AG04449 (cell line): ENCODE measurements at regions of chr5 and their contacts with region 1.

Region 1: GRCh38 chr5:54492178-54492577 is 25.4 kb upstream of the SNX18 start:
- DNase-seq: no peak
- H3K4me3 ChIP-seq: no peak overlapping the region
- CTCF ChIP-seq: no peak

Region 2: GRCh38 chr5:54254482-54255198 is 237.5 kb before region 1 on chr5:
- CTCF ChIA-PET with region 1: interaction called, 190 read pairs
- POLR2A ChIA-PET with region 1: no interaction called
- DNase-seq: no peak
- H3K4me3 ChIP-seq: no peak overlapping the region
- CTCF ChIP-seq: no peak

Region 3: GRCh38 chr5:54415896-54416601 is 76.1 kb before region 1 on chr5:
- CTCF ChIA-PET with region 1: interaction called, 46 read pairs
- POLR2A ChIA-PET with region 1: no interaction called
- DNase-seq: peak; percentile 75
- H3K4me3 ChIP-seq: no peak overlapping the region
- CTCF ChIP-seq: no peak

Region 4: DNA sequence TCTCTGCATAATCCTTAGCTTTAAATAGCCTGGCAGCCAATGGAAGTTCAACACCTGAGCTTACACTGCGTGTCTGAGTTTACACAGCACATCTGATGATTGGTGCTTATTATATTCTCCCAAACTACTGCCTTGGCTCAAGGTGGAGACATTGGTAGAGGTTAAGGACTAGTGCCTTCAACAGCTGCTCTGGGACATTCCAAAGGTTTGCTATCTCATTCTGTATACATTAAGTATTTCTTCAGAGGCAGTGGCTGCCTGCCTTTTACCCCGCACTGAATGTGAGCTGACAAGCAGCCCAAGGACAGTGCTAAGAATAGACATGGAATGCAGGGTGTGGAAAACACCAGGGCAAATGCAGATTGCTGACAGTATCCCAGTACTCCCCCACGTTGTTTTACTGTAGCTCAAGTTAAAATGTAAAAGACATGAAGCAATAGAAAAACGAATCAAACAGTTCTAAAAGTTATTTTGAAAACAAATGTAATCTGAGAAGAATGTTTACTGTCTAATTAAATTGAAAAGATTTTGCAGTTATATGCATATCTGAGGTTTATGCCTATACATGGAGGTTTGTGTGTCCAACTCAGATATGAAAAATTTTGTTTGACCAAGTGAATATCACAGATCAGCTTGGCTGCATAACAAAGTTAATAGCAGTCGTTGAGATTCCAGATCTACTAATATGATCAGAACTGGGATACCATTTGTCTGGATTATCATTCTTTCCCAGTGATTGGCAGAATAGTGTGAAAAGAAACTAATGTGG is 34.9 kb before region 1 on chr5:
- CTCF ChIA-PET with region 1: interaction called, 55 read pairs
- POLR2A ChIA-PET with region 1: no interaction called
- DNase-seq: peak; percentile 84
- H3K4me3 ChIP-seq: peak overlapping the region; percentile 32
- CTCF ChIP-seq: no peak

Region 5: DNA sequence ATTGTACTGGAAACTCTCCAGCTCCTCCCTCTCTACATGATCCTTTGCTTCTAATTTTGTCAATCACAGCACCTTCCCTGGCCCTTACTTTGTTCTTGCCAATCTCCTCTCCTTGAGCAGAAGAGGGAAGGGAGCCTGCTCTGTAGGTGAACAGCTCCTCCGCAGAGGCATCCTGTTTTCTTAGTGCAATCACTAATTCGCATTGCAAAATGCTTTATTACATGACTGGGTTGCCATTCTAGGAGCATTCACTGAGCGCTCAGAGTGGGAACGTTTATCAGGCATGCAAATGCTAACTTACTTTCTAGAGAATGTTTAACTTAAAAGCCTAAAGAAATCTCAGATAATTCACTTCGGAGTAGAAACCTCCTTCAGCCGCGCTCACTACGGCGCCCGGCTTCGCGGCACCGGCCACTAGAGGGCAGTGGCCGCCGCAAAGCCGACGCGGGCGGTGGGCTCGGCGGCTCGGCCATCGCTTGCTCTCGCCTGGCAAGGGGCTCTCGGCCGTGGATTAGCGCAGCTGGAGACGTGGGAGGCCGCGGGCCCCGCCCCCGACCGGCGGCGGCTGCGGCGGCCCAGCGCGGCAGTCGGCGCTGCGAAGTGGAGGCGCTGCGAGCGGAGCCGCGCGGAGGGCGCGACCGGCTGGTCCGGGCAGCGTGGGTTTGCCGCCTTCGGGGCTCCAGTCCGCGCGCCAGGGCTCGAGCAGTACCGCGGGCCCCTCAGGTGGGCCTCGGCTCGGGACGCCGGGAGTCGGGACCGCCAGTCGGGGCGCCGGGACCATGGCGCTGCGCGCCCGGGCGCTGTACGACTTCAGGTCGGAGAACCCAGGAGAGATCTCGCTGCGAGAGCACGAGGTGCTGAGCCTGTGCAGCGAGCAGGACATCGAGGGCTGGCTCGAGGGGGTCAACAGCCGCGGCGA is 25.3 kb after region 1 on chr5 and contains the start of gene SNX18:
- CTCF ChIA-PET with region 1: interaction called, 27 read pairs
- POLR2A ChIA-PET with region 1: no interaction called
- DNase-seq: peak; percentile 56
- H3K4me3 ChIP-seq: peak within 1 kb of the TSS; percentile 62
- CTCF ChIP-seq: peak; percentile 88

Region 6: DNA sequence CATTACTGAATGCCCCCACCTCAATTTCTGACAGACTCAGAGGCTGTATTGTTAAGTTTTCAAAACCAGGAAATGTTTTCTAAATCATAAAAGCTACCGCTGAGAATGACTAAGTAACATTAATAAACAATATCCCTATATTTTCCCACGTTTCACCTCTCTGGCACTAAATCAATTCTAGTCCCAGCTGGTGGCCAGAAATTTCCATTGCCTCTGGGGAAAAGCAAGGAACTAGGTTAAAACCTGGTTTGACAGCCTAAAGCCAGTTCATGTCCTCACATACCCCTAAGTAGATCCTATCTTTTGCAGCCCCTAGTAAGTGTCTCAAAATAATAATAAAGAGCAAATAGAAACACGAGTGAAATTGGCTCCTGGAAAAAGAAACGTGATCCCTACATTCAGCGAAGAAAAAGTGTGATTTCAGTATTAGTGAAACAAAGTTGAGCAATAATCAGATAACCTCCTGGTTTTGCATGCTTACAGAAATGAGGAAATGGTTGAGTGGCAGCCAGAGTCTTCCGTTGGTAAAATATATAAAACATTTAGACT is 382.3 kb after region 1 on chr5:
- CTCF ChIA-PET with region 1: interaction called, 29 read pairs
- POLR2A ChIA-PET with region 1: no interaction called
- DNase-seq: no peak
- H3K4me3 ChIP-seq: no peak overlapping the region
- CTCF ChIP-seq: no peak